ENCODE measurements at regions of chr4 and their contacts with region 1.

Region 1: DNA sequence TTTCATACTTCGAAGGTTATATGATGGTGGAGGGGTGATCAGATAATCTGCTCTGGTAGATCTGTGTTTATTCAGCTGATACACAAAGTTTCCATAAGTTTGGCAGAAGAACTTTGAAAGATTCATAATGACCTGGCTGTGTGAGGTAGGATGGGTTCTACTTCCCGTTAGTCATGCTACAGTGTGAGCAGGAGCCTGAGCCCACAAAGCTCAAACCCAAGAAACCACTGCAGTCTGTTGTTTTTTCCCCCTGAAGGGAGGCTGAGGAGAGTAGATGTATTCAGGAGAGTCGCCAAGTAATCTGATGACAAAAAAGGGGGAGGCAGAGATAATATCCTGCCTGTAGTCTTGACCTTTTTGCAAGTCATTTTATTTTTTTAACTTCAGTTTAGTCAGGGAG is 52.8 kb upstream of the PPP3CA start:
- DNase-seq: peak; percentile 12
- H3K4me3 Mint-ChIP-seq: peak overlapping the region; percentile 2
- H3K27ac Mint-ChIP-seq: peak overlapping the region; percentile 71
- H3K4me1 Mint-ChIP-seq: peaks cover 22% of the 10 kb centered on the region
- H3K27me3 Mint-ChIP-seq: peaks cover 6% of the 10 kb centered on the region

Region 2: GRCh38 chr4:101271516-101271915 is 128.6 kb before region 1 on chr4:
- intact Hi-C with region 1: no loop called
- DNase-seq: no peak
- H3K4me3 Mint-ChIP-seq: no peak overlapping the region
- H3K27ac Mint-ChIP-seq: no peak overlapping the region
- H3K4me1 Mint-ChIP-seq: peaks cover 8% of the 10 kb centered on the region
- H3K27me3 Mint-ChIP-seq: peaks cover 5% of the 10 kb centered on the region

Region 3: GRCh38 chr4:101282076-101282844 is 117.8 kb before region 1 on chr4:
- intact Hi-C with region 1: loop called (anchors 1 kb)
- DNase-seq: peak; percentile 8
- H3K4me3 Mint-ChIP-seq: peak overlapping the region; percentile 31
- H3K27ac Mint-ChIP-seq: no peak overlapping the region
- H3K4me1 Mint-ChIP-seq: peaks cover 43% of the 10 kb centered on the region
- H3K27me3 Mint-ChIP-seq: no peaks in the 10 kb centered on the region

Measured in activated T-helper 1 cell treated with anti-CD3 and anti-CD28 coated beads, Interleukin-12 subunit alpha, Interleukin-12 subunit beta, Interleukin-2, Interleukin-4 antibody, amounts not matched to agents 30 ng/mL and 10 ng/mL and 1 ng/mL, durations not matched to agents 14 hours and 24 hours and 36 hours (primary cell).